Endothelial cell of umbilical vein (primary cell): ENCODE measurements at regions of chr15 and their contacts with region 1.

Region 1: DNA sequence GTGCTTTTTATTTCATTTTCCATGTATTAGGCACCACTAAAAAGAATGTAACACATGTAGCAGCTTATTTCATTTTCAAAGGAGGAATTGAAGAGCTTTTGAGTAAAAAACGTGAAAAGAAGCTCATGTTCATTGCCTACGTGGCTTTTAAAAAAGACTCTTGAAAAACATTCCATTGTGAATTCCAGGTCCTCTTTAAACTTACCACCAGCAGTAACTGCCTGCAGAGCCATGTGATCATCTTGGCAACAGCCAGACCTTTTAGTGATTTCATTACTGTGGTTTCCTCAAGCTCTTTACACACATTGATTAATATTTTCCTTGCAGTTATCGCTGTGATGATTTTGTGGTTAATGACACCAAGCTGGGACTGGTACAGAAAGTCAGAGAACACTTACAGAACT is 43.8 kb upstream of the FBXL22 start:
- DNase-seq: peak; percentile 89
- H3K4me3 ChIP-seq: no peak overlapping the region
- H3K27ac ChIP-seq: peak overlapping the region; percentile 50
- H3K4me1 ChIP-seq: peaks cover 15% of the 10 kb centered on the region
- H3K27me3 ChIP-seq: no peaks in the 10 kb centered on the region
- CTCF ChIP-seq: no peak
- POLR2A ChIP-seq: no peak

Region 2: DNA sequence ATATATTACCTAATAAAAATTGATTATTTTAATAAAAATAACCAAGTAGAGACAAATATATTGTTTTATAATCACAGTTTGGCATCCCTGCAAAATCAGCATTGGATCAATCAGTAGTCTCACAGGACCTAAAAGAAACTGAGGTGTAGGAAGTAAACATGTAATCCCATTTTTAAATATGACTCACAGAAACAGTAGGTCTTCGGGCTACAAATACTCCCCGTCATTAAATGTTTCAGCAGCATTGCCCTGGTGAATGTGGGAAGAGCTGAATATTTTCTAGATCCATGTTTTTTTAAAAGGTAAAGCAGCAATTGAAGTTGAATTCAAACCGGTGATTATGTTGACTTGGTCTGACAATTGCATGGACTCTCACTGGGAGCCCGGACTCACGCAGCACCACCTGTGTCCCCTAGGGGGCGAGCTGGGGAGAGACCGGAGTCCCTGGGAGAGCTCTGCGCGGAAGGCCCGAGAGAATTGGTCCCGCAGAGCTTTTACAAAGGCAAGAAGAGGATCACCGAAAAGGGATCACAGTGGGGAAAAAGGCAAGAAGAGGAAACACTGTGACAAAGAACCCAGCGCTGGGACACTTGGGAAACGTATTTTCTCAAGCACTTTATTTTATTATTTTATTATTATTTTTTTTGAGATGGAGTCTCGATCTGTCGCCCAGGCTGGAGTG is 66.2 kb before region 1 on chr15:
- CTCF ChIA-PET with region 1: interaction called, 16 read pairs
- POLR2A ChIA-PET with region 1: no interaction called
- dilution Hi-C with region 1: no loop called
- intact Hi-C with region 1: no loop called
- DNase-seq: peak; percentile 79
- H3K4me3 ChIP-seq: no peak overlapping the region
- H3K27ac ChIP-seq: no peak overlapping the region
- H3K4me1 ChIP-seq: peaks cover 14% of the 10 kb centered on the region
- H3K27me3 ChIP-seq: peaks cover 0 to 2% of the 10 kb centered on the region in 2 experiments
- CTCF ChIP-seq: peak; percentile 98
- POLR2A ChIP-seq: no peak

Region 3: GRCh38 chr15:63539521-63539920 is 13.9 kb before region 1 on chr15:
- CTCF ChIA-PET with region 1: interaction called, 10 read pairs
- POLR2A ChIA-PET with region 1: interaction called, 3 read pairs
- dilution Hi-C with region 1: no loop called
- intact Hi-C with region 1: no loop called
- DNase-seq: peak; percentile 69
- H3K4me3 ChIP-seq: no peak overlapping the region
- H3K27ac ChIP-seq: no peak overlapping the region
- H3K4me1 ChIP-seq: peaks cover 7% of the 10 kb centered on the region
- H3K27me3 ChIP-seq: no peaks in the 10 kb centered on the region
- CTCF ChIP-seq: no peak
- POLR2A ChIP-seq: no peak

Region 4: DNA sequence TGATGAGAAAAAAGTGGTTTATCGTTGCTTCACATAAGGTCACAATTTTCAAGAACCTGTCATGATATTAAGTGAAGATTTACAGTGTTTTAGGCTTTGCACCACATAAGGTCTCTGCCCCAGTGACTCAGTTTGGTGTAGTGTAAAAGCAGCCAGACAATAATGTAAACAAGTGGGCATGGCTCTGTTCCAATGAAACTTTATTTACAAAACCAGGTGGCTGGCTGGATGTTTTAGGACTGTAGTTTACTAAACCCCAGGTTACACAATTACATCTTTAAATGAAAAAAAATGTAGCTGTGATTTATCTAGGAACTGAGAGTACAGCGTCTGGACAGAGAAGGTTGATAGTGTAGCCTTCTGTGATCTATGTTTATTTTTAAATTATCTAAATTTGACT is 34.1 kb after region 1 on chr15:
- CTCF ChIA-PET with region 1: no interaction called
- POLR2A ChIA-PET with region 1: no interaction called
- dilution Hi-C with region 1: no loop called
- intact Hi-C with region 1: no loop called
- DNase-seq: peak; percentile 36
- H3K4me3 ChIP-seq: no peak overlapping the region
- H3K27ac ChIP-seq: no peak overlapping the region
- H3K4me1 ChIP-seq: no peaks in the 10 kb centered on the region
- H3K27me3 ChIP-seq: no peaks in the 10 kb centered on the region
- CTCF ChIP-seq: no peak
- POLR2A ChIP-seq: no peak

Region 5: DNA sequence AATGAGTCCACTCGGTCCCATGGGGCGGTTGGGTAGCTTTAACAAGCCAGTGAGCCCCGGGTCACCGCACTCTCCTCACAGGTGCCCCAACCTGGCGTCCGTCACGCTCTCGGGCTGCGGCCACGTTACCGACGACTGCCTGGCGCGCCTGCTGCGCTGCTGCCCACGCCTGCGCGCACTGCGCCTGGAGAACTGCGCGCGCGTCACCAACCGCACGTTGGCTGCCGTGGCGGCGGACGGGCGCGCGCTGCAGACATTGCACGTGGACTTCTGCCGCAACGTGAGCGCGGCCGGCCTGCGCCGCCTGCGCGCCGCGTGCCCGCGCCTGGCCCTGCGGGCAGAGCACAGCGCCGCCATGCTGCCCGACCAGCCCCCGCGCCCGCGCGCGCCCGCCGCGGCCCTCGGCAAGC is 47.2 kb after region 1 on chr15:
- CTCF ChIA-PET with region 1: interaction called, 15 read pairs
- POLR2A ChIA-PET with region 1: no interaction called
- dilution Hi-C with region 1: no loop called
- intact Hi-C with region 1: no loop called
- DNase-seq: peak; percentile 94
- H3K4me3 ChIP-seq: peak overlapping the region; percentile 56 to 82 (median 71)
- H3K27ac ChIP-seq: no peak overlapping the region
- H3K4me1 ChIP-seq: peaks cover 11% of the 10 kb centered on the region
- H3K27me3 ChIP-seq: no peaks in the 10 kb centered on the region
- CTCF ChIP-seq: peak in 1 of 2 donors; percentile 20
- POLR2A ChIP-seq: peak; percentile 95